ENCODE measurements at regions of chr17 and their contacts with region 1.

Region 1: DNA sequence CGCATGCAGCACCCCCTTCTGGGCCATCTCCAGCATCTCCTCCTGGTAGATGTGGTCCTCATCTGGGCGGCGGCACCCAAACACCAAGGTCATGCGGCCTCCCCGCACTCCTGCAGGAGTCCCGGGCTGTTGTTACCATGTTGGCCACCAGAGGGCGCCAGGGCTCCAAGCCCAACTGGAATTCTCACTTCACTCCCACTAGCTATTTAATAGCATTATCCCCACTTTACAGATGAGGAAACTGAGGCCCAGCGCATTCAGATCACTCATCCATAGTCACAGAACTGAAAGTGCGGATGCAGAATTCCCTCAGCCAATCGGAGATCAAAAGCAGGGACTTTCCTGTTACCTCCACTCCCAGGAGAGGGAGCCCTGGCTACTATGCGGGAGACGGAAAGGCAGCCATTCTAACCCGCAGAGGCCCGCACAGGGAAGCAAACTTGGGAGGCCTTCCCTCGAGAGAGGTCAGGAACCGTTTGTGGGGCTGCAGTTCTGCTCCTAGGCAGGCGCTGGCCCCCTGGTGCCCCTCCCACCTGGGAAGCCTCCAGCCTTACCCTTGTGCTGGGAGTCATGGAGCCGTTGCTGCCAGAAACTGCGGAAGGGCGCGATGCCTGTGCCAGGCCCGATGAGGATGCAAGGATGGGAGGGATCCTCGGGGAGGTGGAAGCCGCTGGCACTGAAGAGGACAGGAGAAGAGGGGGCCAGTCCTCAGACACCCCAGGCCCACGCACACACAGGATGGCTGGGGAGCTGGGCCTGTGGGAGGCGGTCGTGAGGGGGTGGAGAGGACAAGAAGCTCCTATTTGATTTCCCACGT is 40.1 kb downstream of the NOS2 start:
- DNase-seq: peak; percentile 32 to 53 (median 37)
- H3K4me3 ChIP-seq: no peak overlapping the region
- H3K4me3 Mint-ChIP-seq: no peak overlapping the region
- H3K27ac ChIP-seq: no peak overlapping the region
- H3K27ac Mint-ChIP-seq: no peak overlapping the region
- H3K4me1 ChIP-seq: no peaks in the 10 kb centered on the region
- H3K4me1 Mint-ChIP-seq: no peaks in the 10 kb centered on the region
- H3K27me3 ChIP-seq: no peaks in the 10 kb centered on the region
- H3K27me3 Mint-ChIP-seq: peaks cover 0 to 5% (median 3%) of the 10 kb centered on the region in 3 donors
- CTCF ChIP-seq: peak; percentile 97

Region 2: DNA sequence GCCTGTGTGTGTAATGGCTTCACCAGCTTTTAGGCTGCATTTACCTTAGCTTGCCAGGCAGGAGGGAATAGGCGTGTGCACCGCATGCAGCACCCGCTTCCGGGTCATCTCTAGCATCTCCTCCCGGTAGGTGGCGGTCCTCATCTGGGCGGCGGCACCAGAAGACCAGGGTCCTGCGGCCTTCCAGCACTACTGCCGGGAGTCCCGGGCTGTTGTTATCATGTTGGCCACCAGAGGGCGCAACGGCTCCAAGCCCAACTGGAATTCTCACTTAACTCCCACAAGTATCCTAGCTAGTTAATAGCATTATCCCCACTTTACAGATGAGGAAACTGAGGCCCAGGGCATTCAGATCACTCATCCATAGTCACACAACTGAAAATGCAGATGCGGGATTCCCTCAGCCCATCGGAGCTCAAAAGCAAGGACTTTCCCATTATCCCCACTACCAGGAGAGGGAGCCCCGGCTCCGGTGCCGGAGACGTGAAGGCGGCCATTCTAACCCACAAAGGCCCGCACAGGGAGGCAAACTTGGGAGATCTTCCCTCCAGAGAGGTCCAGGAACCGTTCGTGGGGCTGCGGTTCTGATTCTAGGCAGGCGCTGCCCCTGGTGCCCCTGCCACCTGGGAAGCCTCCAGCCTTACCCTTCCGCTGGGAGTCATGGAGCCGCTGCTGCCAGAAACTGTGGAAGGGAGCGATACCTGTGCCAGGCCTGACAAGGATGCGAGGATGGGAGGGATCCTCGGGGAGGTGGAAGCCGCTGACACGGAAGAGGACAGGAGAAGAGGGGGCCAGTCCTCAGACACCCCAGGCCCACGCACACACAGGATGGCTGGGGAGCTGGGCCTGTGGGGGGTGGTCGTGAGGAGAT is 105.4 kb before region 1 on chr17:
- intact Hi-C with region 1: loop called (anchors 1 kb)
- DNase-seq: peak; percentile 51 to 72 (median 59)
- H3K4me3 ChIP-seq: no peak overlapping the region
- H3K4me3 Mint-ChIP-seq: no peak overlapping the region
- H3K27ac ChIP-seq: no peak overlapping the region
- H3K27ac Mint-ChIP-seq: peak overlapping the region in 1 of 7 donors; percentile 2
- H3K4me1 ChIP-seq: no peaks in the 10 kb centered on the region
- H3K4me1 Mint-ChIP-seq: no peaks in the 10 kb centered on the region
- H3K27me3 ChIP-seq: no peaks in the 10 kb centered on the region
- H3K27me3 Mint-ChIP-seq: peaks cover 1 to 5% (median 2%) of the 10 kb centered on the region in 3 donors
- CTCF ChIP-seq: peak; percentile 96

Region 3: GRCh38 chr17:27807567-27808470 is 47.5 kb after region 1 on chr17:
- intact Hi-C with region 1: no loop called
- DNase-seq: no peak
- H3K4me3 ChIP-seq: no peak overlapping the region
- H3K4me3 Mint-ChIP-seq: peak overlapping the region; percentile 34 to 69
- H3K27ac ChIP-seq: no peak overlapping the region
- H3K27ac Mint-ChIP-seq: peak overlapping the region in 2 of 7 donors; percentile 46 to 50
- H3K4me1 ChIP-seq: peaks cover 13 to 22% of the 10 kb centered on the region in 2 donors
- H3K4me1 Mint-ChIP-seq: peaks cover 30% of the 10 kb centered on the region
- H3K27me3 ChIP-seq: no peaks in the 10 kb centered on the region
- H3K27me3 Mint-ChIP-seq: peaks cover 0 to 1% (median 0%) of the 10 kb centered on the region in 3 donors
- CTCF ChIP-seq: no peak